HEK293 (cell line): ENCODE measurements at regions of chr2 and their contacts with region 1.

Region 1: DNA sequence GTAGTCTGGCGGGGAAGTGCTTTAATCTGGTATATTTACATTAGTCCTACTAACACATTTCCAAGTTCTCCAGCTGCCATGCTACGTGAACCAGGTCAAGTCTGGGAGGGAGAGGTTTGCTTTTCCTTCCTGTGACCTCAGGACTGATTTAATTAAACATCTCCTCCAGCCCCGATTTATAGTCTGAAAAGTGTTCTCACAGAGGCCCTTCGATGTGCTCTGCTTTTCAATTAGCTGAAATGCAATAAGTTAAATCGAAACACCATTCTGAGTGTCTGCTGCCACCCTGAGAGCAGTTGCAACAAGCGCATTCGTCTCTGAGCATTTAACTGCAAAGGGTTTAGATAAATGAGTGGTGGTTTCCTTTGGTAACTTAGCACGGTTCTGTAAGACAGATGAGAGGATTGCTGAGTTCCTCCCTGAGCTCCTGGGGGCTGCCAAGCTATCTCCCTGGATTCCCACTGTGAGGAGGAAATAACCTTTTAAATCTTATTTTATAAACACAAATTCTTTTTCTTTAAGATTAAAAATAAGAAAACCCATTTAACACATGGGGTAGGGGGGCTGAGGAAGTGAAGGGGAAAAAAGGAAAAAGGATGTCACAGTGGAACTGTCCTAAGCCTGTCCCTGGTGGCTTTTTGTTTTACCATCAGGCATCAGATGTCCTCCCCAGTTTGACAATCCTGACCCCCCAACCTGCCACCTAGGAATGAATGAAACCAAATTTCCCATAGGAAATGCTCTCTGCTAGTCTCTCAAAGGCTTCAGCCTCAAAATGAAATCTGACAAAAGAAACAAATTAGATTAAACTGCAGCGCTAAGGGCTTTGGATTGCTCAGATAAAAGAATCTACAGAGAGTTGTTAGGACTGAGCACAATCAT is 56.5 kb upstream of the CREB1 start:
- H3K4me3 ChIP-seq: no peak overlapping the region
- H3K27ac ChIP-seq: no peak overlapping the region
- H3K4me1 ChIP-seq: no peaks in the 10 kb centered on the region
- CTCF ChIP-seq: peak; percentile 53; the same call in 1 of the 2 replicates

Region 2: DNA sequence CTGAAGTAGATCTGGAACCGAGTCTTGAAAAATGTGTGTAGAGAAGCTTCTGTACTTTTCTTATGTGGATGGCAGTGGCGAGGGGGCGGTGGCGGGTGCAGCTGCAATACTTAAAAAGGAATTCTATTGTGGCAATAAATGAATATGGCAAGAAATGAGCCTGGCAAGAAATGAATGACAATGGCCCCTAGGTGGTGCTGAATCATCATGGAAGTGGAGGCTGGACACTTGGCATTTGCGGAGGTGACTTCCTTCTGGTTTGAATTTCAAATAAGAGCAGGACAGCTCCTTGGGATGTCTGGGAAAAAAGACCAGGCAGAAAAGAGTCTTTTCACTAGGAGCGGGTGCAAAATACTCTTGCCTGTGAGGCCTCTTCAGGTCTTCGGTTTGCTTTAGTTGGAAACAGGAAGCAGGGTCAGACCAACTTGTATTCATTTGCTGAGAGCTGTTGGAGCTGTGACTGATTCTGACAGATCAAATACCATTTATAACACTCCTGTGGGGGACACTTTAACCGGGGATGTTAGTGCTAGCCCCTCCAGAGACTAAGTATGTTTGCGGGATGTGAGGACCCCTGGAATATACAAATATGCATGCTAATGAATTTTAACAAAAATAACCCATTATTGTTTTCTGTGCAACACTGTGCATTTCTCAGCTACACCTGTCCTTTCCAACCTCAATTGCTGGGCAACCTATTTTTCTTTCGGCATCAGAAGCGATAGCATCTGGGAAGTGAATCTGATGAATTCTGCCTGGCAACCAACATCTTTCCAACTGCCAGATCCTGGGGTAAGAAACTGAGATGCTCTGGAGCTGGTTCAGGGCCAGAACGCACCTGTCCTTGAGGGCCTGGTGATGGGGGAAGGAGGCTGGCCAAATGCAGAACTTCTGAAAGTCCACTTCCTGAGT is 672.5 kb before region 1 on chr2:
- CTCF ChIA-PET with region 1: interaction called, 32 read pairs
- POLR2A ChIA-PET with region 1: no interaction called
- H3K4me3 ChIP-seq: no peak overlapping the region
- H3K27ac ChIP-seq: no peak overlapping the region
- H3K4me1 ChIP-seq: no peaks in the 10 kb centered on the region
- CTCF ChIP-seq: peak; percentile 66; the same call in 1 of the 2 replicates

Region 3: DNA sequence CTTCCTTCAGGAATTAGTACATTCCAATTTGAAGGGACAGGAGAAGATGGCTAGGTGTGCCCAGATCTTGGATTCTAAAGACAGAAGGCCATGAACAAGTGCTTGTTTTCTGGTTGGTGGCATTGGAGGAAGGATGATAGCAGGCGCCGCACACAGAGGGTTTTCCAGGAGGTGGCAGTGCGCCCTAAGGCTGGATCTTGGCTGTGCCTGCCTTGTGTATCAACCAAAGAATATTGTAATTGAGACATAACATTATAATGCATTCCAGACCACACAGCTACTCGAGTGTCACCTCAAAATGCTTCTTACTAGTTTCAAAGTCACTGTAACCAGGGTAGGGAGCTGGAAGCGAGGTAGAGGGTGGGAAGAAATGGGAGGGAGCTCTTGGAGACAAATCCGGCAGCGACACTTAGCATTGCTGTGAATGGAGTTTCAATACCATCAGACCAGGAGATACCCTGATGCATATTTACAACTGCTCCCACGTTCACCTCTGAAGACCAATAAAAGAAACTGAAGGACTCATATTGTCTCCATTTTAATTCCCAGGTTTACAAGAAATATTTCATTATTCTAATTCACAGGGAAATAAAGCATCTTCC is 491.4 kb before region 1 on chr2:
- CTCF ChIA-PET with region 1: interaction called, 34 read pairs
- POLR2A ChIA-PET with region 1: no interaction called
- H3K4me3 ChIP-seq: no peak overlapping the region
- H3K27ac ChIP-seq: no peak overlapping the region
- H3K4me1 ChIP-seq: peaks cover 3% of the 10 kb centered on the region; the same call in 1 of the 2 replicates
- CTCF ChIP-seq: peak; percentile 84

Region 4: DNA sequence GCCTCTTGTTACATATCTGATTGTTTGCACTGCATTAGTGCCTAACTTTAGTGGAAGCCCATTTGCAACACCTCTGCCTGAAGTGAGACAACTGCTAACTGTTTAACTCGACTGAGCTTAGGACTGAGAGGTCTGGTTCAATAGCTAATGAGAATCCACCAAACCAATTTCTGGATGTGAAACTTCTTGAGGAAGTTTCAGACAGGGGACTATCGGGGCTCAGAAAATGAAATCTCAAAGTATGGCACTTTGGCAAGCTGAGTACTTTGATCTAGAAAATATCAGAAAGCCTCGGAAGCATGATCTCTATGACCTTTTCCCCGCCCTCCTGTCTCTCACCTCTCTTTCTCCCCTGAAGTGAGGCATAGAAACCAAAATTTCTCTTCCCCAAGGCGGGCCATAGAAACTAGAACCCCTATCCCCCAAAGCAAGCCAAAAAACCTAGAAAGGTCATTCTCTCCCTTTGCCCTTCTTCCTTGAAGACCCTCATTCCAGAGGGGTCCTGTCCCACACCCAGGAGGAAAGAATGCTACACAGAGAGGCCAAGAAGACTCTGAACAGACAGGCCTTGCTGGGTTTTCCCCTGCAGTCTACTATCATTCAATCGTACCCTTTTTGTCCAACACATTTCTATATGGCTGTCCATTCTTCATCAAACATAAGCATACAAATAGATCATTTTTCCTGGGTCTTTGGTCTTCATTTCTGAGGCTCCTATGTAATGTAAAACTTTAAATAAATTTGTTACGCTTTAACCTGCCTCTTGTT is 13.1 kb before region 1 on chr2:
- CTCF ChIA-PET with region 1: interaction called, 14 read pairs
- POLR2A ChIA-PET with region 1: no interaction called
- H3K4me3 ChIP-seq: no peak overlapping the region
- H3K27ac ChIP-seq: no peak overlapping the region
- H3K4me1 ChIP-seq: no peaks in the 10 kb centered on the region
- CTCF ChIP-seq: no peak